ENCODE measurements at regions of chr10 and their contacts with region 1.

Region 1: GRCh38 chr10:5434017-5434753 is 21.8 kb downstream of the NET1 start:
- DNase-seq: peak; percentile 53
- H3K4me3 ChIP-seq: no peak overlapping the region
- CTCF ChIP-seq: peak; percentile 51

Region 2: GRCh38 chr10:4576206-4576605 is 858.0 kb before region 1 on chr10:
- CTCF ChIA-PET with region 1: no interaction called
- POLR2A ChIA-PET with region 1: no interaction called
- DNase-seq: no peak
- H3K4me3 ChIP-seq: no peak overlapping the region
- CTCF ChIP-seq: no peak

Region 3: DNA sequence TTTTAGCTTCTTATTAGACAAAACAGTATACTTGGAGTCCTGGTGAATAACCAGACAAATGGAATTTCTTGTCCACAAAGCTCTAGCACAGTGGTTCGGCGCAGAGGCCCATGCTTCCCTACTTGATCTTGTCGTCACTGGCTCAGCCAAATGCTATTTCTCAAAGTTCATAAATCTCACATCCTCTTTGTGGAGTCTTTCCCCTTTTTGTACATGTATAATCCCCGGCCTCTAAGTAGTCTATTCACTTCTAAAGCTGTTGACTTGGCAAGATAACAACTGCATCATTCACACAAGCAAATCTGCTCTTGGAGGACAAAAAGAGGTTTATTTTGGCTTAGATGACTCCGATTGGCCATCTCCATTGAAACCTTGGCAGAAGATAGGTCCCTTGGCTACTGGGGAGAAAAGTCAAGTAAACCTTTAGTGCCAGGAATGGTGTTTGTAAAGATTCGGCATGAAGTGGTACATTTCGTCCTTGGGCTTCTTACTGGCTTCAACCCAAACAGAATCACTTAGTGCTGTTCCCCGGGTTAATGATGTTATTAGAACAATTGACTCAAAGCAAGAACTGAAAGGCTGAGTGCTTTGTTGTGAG is 613.3 kb before region 1 on chr10:
- CTCF ChIA-PET with region 1: interaction called, 85 read pairs
- POLR2A ChIA-PET with region 1: no interaction called
- DNase-seq: no peak
- H3K4me3 ChIP-seq: no peak overlapping the region
- CTCF ChIP-seq: no peak

Region 4: GRCh38 chr10:4839401-4839800 is 594.8 kb before region 1 on chr10:
- CTCF ChIA-PET with region 1: interaction called, 13 read pairs
- POLR2A ChIA-PET with region 1: no interaction called
- DNase-seq: no peak
- H3K4me3 ChIP-seq: no peak overlapping the region
- CTCF ChIP-seq: no peak

Region 5: GRCh38 chr10:5412277-5412941 is 21.8 kb before region 1 on chr10 and contains the start of gene NET1:
- CTCF ChIA-PET with region 1: interaction called, 26 read pairs
- POLR2A ChIA-PET with region 1: no interaction called
- DNase-seq: no peak
- H3K4me3 ChIP-seq: peak within 1 kb of the TSS; percentile 79
- CTCF ChIP-seq: no peak

Region 6: GRCh38 chr10:5423771-5424170 is 10.4 kb before region 1 on chr10:
- CTCF ChIA-PET with region 1: interaction called, 66 read pairs
- POLR2A ChIA-PET with region 1: no interaction called
- DNase-seq: no peak
- H3K4me3 ChIP-seq: no peak overlapping the region
- CTCF ChIP-seq: no peak

Measured in AG04449 (cell line).